GM10248 (cell line): ENCODE measurements at regions of chr7 and their contacts with region 1.

Region 1: GRCh38 chr7:137626469-137627067 is 220.2 kb downstream of the DGKI start:
- DNase-seq: peak; percentile 62
- CTCF ChIP-seq: peak; percentile 70

Region 2: GRCh38 chr7:137492889-137493288 is 133.7 kb before region 1 on chr7:
- CTCF ChIA-PET with region 1: no interaction called
- POLR2A ChIA-PET with region 1: no interaction called
- DNase-seq: no peak
- CTCF ChIP-seq: no peak

Region 3: DNA sequence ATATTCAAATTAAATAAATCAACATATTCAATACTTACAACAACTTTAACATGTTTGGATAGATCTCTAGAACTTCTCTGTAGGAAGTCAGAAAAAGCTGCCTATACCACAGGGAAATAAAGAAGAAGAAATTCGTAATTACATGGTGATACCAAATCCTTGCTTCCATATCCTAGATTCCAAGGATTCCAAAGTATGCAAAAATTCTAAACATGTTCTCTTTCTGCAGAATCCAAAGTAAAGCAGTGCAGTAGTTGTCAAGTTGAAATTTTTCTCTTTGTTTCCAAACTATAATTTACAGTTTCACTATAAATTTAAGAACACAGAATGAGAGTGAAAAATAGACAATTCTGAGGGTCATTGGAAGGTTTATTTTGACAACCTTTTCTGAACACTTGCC is 49.4 kb before region 1 on chr7:
- CTCF ChIA-PET with region 1: no interaction called
- POLR2A ChIA-PET with region 1: no interaction called
- DNase-seq: no peak
- CTCF ChIP-seq: no peak

Region 4: DNA sequence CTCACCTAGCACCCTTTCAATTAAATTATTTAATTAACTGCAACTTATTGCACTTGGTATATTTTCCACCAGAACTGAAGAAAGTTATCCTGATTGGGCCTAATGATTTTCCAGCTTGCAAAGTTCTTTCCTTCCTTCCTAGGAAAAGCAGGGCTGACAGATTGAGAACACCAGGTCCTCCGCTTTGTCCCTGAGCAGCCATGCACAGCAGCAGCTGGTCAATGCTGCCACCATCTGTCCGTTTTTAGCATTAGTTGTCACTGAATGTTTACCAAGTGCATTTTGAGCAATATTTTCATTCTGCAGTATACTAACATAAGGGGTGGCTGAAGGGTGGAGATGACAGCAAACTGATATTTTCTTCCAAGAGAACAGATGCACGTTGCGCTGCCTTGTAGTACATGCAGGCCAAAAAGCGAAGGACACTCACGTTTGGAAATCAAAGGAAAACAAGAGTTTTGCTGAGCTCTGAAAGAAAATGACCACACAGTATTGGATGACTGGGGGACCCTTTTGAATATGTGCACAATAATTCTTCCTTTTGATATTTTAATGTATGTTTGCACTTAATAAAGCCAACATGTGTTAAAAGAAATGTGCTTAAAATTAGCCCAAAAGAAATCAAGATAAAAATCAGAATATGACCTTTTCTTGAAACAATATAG is 34.2 kb before region 1 on chr7:
- CTCF ChIA-PET with region 1: interaction called, 16 read pairs
- POLR2A ChIA-PET with region 1: no interaction called
- DNase-seq: peak; percentile 34
- CTCF ChIP-seq: peak; percentile 62

Region 5: GRCh38 chr7:137606061-137606674 is 20.4 kb before region 1 on chr7:
- CTCF ChIA-PET with region 1: interaction called, 12 read pairs
- POLR2A ChIA-PET with region 1: no interaction called
- DNase-seq: no peak
- CTCF ChIP-seq: peak; percentile 23

Region 6: DNA sequence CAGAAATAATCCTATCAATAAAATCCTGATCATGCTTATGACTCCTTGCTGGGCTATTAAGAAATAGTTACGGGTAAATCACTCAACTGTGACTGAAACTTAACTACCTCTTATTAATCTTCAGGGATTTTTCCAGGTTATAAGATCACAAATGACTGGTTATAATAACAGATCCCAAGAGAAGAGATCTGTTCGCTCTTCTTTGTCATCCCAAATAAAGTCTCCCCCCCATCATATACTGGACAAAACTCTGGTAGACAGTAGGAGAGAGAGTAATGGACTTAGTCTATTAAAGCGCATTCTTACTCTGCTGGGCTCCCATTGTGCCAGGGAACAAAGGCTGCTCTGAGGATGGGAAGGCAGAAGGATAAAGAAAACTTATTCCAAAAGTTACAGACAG is 13.6 kb before region 1 on chr7:
- CTCF ChIA-PET with region 1: interaction called, 12 read pairs
- POLR2A ChIA-PET with region 1: no interaction called
- DNase-seq: no peak
- CTCF ChIP-seq: no peak

Region 7: GRCh38 chr7:137670199-137671071 is 43.9 kb after region 1 on chr7:
- CTCF ChIA-PET with region 1: interaction called, 10 read pairs
- POLR2A ChIA-PET with region 1: no interaction called
- DNase-seq: peak; percentile 45
- CTCF ChIP-seq: no peak